CD8-positive, alpha-beta T cell (primary cell): ENCODE measurements at regions of chr17 and their contacts with region 1.

Region 1: GRCh38 chr17:8109661-8110464 is 8.5 kb downstream of the ALOXE3 start:
- DNase-seq: peak; percentile 68 to 91 (median 83)
- ATAC-seq: peak; percentile 99
- H3K4me3 ChIP-seq: peak overlapping the region; percentile 40 to 77
- H3K4me3 Mint-ChIP-seq: peak overlapping the region; percentile 71
- H3K27ac ChIP-seq: peak overlapping the region in 1 of 2 experiments; percentile 31
- H3K27ac Mint-ChIP-seq: no peak overlapping the region
- H3K4me1 ChIP-seq: peaks cover 9% of the 10 kb centered on the region
- H3K4me1 Mint-ChIP-seq: peaks cover 4% of the 10 kb centered on the region
- H3K27me3 ChIP-seq: peaks cover 0 to 24% of the 10 kb centered on the region in 2 experiments
- H3K27me3 Mint-ChIP-seq: peaks cover 28% of the 10 kb centered on the region
- CTCF ChIP-seq: peak; percentile 94

Region 2: GRCh38 chr17:7137171-7137943 is 972.5 kb before region 1 on chr17:
- CTCF ChIA-PET with region 1: no interaction called
- POLR2A ChIA-PET with region 1: no interaction called
- intact Hi-C with region 1: no loop called
- DNase-seq: no peak
- ATAC-seq: no peak
- H3K4me3 ChIP-seq: no peak overlapping the region
- H3K4me3 Mint-ChIP-seq: no peak overlapping the region
- H3K27ac ChIP-seq: no peak overlapping the region
- H3K27ac Mint-ChIP-seq: no peak overlapping the region
- H3K4me1 ChIP-seq: peaks cover 5% of the 10 kb centered on the region
- H3K4me1 Mint-ChIP-seq: peaks cover 16% of the 10 kb centered on the region
- H3K27me3 ChIP-seq: no peaks in the 10 kb centered on the region
- H3K27me3 Mint-ChIP-seq: peaks cover 12% of the 10 kb centered on the region
- CTCF ChIP-seq: no peak

Region 3: GRCh38 chr17:7306911-7307686 is 802.8 kb before region 1 on chr17 and contains the start of gene EIF5A:
- CTCF ChIA-PET with region 1: no interaction called
- POLR2A ChIA-PET with region 1: no interaction called
- intact Hi-C with region 1: no loop called
- DNase-seq: peak; percentile 100
- ATAC-seq: peak; percentile 67
- H3K4me3 ChIP-seq: peak within 1 kb of the TSS; percentile 66 to 92
- H3K4me3 Mint-ChIP-seq: peak within 1 kb of the TSS; percentile 98
- H3K27ac ChIP-seq: peak within 1 kb of the TSS; percentile 91 to 94
- H3K27ac Mint-ChIP-seq: peak within 1 kb of the TSS; percentile 99
- H3K4me1 ChIP-seq: peaks cover 25% of the 10 kb centered on the region
- H3K4me1 Mint-ChIP-seq: peaks cover 40% of the 10 kb centered on the region
- H3K27me3 ChIP-seq: no peaks in the 10 kb centered on the region
- H3K27me3 Mint-ChIP-seq: no peaks in the 10 kb centered on the region
- CTCF ChIP-seq: no peak
- total RNA-seq, gene EIF5A: 581 to 613 TPM

Region 4: GRCh38 chr17:7818746-7819645 is 290.9 kb before region 1 on chr17:
- CTCF ChIA-PET with region 1: no interaction called
- POLR2A ChIA-PET with region 1: no interaction called
- intact Hi-C with region 1: no loop called
- DNase-seq: no peak
- ATAC-seq: no peak
- H3K4me3 ChIP-seq: no peak overlapping the region
- H3K4me3 Mint-ChIP-seq: no peak overlapping the region
- H3K27ac ChIP-seq: no peak overlapping the region
- H3K27ac Mint-ChIP-seq: no peak overlapping the region
- H3K4me1 ChIP-seq: no peaks in the 10 kb centered on the region
- H3K4me1 Mint-ChIP-seq: no peaks in the 10 kb centered on the region
- H3K27me3 ChIP-seq: no peaks in the 10 kb centered on the region
- H3K27me3 Mint-ChIP-seq: no peaks in the 10 kb centered on the region
- CTCF ChIP-seq: no peak

Region 5: GRCh38 chr17:8073627-8074484 is 36.0 kb before region 1 on chr17:
- CTCF ChIA-PET with region 1: interaction called, 66 read pairs
- POLR2A ChIA-PET with region 1: no interaction called
- intact Hi-C with region 1: no loop called
- DNase-seq: peak; percentile 74 to 93 (median 88)
- ATAC-seq: peak; percentile 96
- H3K4me3 ChIP-seq: peak overlapping the region in 1 of 2 experiments; percentile 45
- H3K4me3 Mint-ChIP-seq: peak overlapping the region; percentile 84
- H3K27ac ChIP-seq: no peak overlapping the region
- H3K27ac Mint-ChIP-seq: peak overlapping the region; percentile 37
- H3K4me1 ChIP-seq: peaks cover 22% of the 10 kb centered on the region
- H3K4me1 Mint-ChIP-seq: peaks cover 22% of the 10 kb centered on the region
- H3K27me3 ChIP-seq: peaks cover 11 to 22% of the 10 kb centered on the region in 2 experiments
- H3K27me3 Mint-ChIP-seq: peaks cover 36% of the 10 kb centered on the region
- CTCF ChIP-seq: peak; percentile 89

Region 6: GRCh38 chr17:8079291-8080207 is 30.3 kb before region 1 on chr17:
- CTCF ChIA-PET with region 1: interaction called, 66 read pairs
- POLR2A ChIA-PET with region 1: interaction called, 3 read pairs
- intact Hi-C with region 1: loop called in 1 of 2 experiments (anchors 1 kb)
- DNase-seq: peak; percentile 64 to 93 (median 82)
- ATAC-seq: peak; percentile 83
- H3K4me3 ChIP-seq: peak overlapping the region; percentile 64 to 80
- H3K4me3 Mint-ChIP-seq: peak overlapping the region; percentile 90
- H3K27ac ChIP-seq: peak overlapping the region; percentile 57 to 71
- H3K27ac Mint-ChIP-seq: peak overlapping the region; percentile 91
- H3K4me1 ChIP-seq: peaks cover 7% of the 10 kb centered on the region
- H3K4me1 Mint-ChIP-seq: peaks cover 18% of the 10 kb centered on the region
- H3K27me3 ChIP-seq: peaks cover 2% of the 10 kb centered on the region in 2 experiments
- H3K27me3 Mint-ChIP-seq: peaks cover 6% of the 10 kb centered on the region
- CTCF ChIP-seq: peak; percentile 89

Region 7: GRCh38 chr17:8091033-8091687 is 18.7 kb before region 1 on chr17:
- CTCF ChIA-PET with region 1: interaction called, 186 read pairs
- POLR2A ChIA-PET with region 1: no interaction called
- intact Hi-C with region 1: loop called (anchors 1 kb)
- DNase-seq: peak in 1 of 9 experiments; percentile 28
- ATAC-seq: no peak
- H3K4me3 ChIP-seq: no peak overlapping the region
- H3K4me3 Mint-ChIP-seq: no peak overlapping the region
- H3K27ac ChIP-seq: no peak overlapping the region
- H3K27ac Mint-ChIP-seq: no peak overlapping the region
- H3K4me1 ChIP-seq: peaks cover 11% of the 10 kb centered on the region
- H3K4me1 Mint-ChIP-seq: peaks cover 8% of the 10 kb centered on the region
- H3K27me3 ChIP-seq: peaks cover 0 to 5% of the 10 kb centered on the region in 2 experiments
- H3K27me3 Mint-ChIP-seq: peaks cover 33% of the 10 kb centered on the region
- CTCF ChIP-seq: no peak

Region 8: GRCh38 chr17:8354236-8354635 is 244.4 kb after region 1 on chr17:
- CTCF ChIA-PET with region 1: no interaction called
- POLR2A ChIA-PET with region 1: no interaction called
- intact Hi-C with region 1: no loop called
- DNase-seq: no peak
- ATAC-seq: no peak
- H3K4me3 ChIP-seq: no peak overlapping the region
- H3K4me3 Mint-ChIP-seq: no peak overlapping the region
- H3K27ac ChIP-seq: no peak overlapping the region
- H3K27ac Mint-ChIP-seq: no peak overlapping the region
- H3K4me1 ChIP-seq: no peaks in the 10 kb centered on the region
- H3K4me1 Mint-ChIP-seq: no peaks in the 10 kb centered on the region
- H3K27me3 ChIP-seq: peaks cover 0 to 3% of the 10 kb centered on the region in 2 experiments
- H3K27me3 Mint-ChIP-seq: peaks cover 9% of the 10 kb centered on the region
- CTCF ChIP-seq: no peak